Endothelial cell of umbilical vein (primary cell): ENCODE measurements at regions of chr4 and their contacts with region 1.

Region 1: DNA sequence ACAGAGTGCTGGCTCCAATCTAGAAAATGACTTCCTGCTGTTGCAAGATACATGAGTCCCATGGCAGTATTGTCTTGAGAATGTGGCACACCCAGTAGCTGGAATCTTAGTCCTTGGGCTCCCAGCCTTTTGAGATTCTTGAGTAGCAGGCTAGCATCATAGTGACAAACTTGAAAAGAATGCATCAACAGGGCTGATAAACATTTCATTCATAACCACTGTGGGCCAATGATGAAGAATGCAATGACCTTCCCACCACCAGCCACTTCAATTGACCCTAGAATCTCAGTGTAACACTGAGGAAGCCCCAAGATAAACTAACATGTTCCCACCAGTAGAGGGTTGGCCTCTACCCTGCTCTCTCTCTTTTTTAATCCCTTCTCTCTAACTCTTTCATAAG is 329.3 kb downstream of the GBA3 start:
- DNase-seq: no peak
- H3K4me3 ChIP-seq: no peak overlapping the region
- H3K27ac ChIP-seq: no peak overlapping the region
- H3K4me1 ChIP-seq: no peaks in the 10 kb centered on the region
- H3K27me3 ChIP-seq: no peaks in the 10 kb centered on the region
- CTCF ChIP-seq: no peak
- POLR2A ChIP-seq: no peak

Region 2: DNA sequence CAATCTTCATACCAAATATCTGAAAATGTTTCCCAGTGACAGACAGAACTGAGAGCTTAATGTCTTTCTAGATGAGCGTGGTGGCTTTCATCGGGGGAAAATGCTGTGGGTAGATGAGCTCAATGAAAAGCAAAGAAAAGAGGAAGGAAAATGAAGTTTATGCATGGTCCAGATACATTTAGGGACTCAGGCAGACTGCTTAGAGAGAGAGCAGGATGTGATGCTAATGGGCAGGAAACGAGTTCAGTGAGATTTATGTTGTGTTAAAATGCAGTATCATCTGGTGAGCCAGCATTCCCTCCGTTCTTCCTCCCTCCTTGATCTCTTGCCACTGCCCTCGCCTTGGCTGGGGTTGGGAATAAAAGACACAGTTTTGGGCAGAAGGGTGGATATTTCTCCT is 100.1 kb before region 1 on chr4:
- CTCF ChIA-PET with region 1: no interaction called
- POLR2A ChIA-PET with region 1: no interaction called
- dilution Hi-C with region 1: no loop called
- intact Hi-C with region 1: loop called (anchors 10 kb)
- DNase-seq: no peak
- H3K4me3 ChIP-seq: no peak overlapping the region
- H3K27ac ChIP-seq: no peak overlapping the region
- H3K4me1 ChIP-seq: no peaks in the 10 kb centered on the region
- H3K27me3 ChIP-seq: no peaks in the 10 kb centered on the region
- CTCF ChIP-seq: no peak
- POLR2A ChIP-seq: no peak

Region 3: DNA sequence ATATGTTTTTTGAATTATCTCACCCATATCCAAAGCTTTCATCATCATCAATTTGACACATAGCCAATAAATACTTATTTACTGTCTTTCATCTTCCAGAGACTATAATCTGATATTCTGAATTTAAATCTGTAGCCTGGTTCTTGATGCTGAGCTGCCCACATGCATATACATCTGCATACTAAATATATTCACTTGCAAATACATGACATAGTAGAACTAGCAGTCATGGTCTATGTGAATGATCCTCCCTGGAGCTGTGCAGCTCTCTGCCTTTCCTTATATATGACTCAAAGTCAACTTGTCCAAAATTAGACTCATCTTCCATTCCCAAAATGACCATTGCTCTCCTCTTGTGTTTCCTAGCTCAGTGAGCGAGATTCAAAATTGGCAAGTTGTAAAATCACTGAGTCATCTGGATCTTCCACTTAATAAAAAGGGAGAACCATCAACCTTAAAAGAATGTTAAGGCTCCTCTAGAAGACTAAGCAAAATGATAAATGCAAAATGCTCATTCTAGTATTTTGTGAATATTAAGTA is 419.6 kb after region 1 on chr4:
- CTCF ChIA-PET with region 1: no interaction called
- POLR2A ChIA-PET with region 1: no interaction called
- dilution Hi-C with region 1: no loop called
- intact Hi-C with region 1: no loop called
- DNase-seq: no peak
- H3K4me3 ChIP-seq: no peak overlapping the region
- H3K27ac ChIP-seq: no peak overlapping the region
- H3K4me1 ChIP-seq: no peaks in the 10 kb centered on the region
- H3K27me3 ChIP-seq: no peaks in the 10 kb centered on the region
- CTCF ChIP-seq: no peak
- POLR2A ChIP-seq: no peak